Mammary epithelial cell (primary cell): ENCODE measurements at regions of chr19 and their contacts with region 1.

Region 1: GRCh38 chr19:4023600-4024398 is 16.3 kb downstream of the PIAS4 start:
- DNase-seq: no peak
- H3K4me3 ChIP-seq: no peak overlapping the region
- H3K27ac ChIP-seq: no peak overlapping the region
- H3K4me1 ChIP-seq: no peaks in the 10 kb centered on the region
- H3K27me3 ChIP-seq: no peaks in the 10 kb centered on the region
- CTCF ChIP-seq: no peak

Region 2: GRCh38 chr19:3966051-3967017 is 57.5 kb before region 1 on chr19:
- CTCF ChIA-PET with region 1: no interaction called
- dilution Hi-C with region 1: no loop called
- in situ Hi-C with region 1: no loop called
- intact Hi-C with region 1: no loop called
- DNase-seq: no peak
- H3K4me3 ChIP-seq: no peak overlapping the region
- H3K27ac ChIP-seq: no peak overlapping the region
- H3K4me1 ChIP-seq: peaks cover 24% of the 10 kb centered on the region
- H3K27me3 ChIP-seq: no peaks in the 10 kb centered on the region
- CTCF ChIP-seq: no peak

Region 3: DNA sequence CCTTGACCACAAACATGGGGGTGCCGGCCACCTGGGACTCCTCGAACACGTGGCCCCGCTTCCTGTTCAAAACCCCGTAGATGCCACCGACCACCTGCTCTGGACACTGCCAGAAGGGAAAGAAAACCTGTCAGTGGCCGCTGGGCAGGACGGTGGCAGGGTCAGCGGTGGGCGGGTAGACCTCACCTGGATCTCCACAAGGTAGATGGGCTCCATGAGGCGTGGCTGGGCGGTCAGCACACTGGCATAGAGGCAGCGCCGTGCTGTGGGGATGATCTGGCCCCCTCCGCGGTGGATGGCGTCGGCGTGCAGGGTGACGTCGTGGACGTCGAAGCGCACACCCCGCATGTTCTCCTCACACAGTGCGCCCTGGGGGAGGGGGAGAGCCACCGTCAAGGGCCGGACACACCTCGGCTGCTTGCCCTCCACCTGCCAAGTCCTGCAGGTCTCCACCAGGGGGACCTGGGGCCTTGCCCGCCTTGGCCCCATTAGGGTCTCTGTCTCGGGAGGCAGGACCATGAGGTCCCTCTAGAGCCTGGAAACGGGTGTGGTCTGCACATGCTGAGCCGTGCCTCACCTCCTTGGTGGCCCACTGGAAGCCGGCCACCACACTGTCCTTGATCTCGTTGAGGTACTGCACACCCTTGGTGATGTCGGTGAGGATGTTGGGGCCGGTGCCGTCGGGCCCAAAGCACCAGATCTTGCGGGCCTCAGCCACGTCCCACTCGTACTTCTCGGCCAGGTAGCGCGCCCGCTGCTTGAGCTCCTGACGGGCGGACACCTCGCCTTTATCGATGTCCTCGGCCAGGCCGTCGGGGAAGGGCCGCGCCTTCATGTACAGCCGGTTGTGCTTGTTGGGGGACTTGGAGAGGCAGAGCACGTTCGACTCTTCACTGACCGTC is 46.3 kb before region 1 on chr19:
- CTCF ChIA-PET with region 1: no interaction called
- dilution Hi-C with region 1: no loop called
- in situ Hi-C with region 1: no loop called
- intact Hi-C with region 1: no loop called
- DNase-seq: no peak
- H3K4me3 ChIP-seq: no peak overlapping the region
- H3K27ac ChIP-seq: no peak overlapping the region
- H3K4me1 ChIP-seq: peaks cover 23% of the 10 kb centered on the region
- H3K27me3 ChIP-seq: no peaks in the 10 kb centered on the region
- CTCF ChIP-seq: peak; percentile 14 to 27

Region 4: GRCh38 chr19:4224470-4224869 is 200.7 kb after region 1 on chr19:
- CTCF ChIA-PET with region 1: no interaction called
- dilution Hi-C with region 1: loop called (anchors 5 kb)
- in situ Hi-C with region 1: no loop called
- intact Hi-C with region 1: no loop called
- DNase-seq: no peak
- H3K4me3 ChIP-seq: no peak overlapping the region
- H3K27ac ChIP-seq: no peak overlapping the region
- H3K4me1 ChIP-seq: peaks cover 7% of the 10 kb centered on the region
- H3K27me3 ChIP-seq: no peaks in the 10 kb centered on the region
- CTCF ChIP-seq: no peak